ENCODE measurements at regions of chr3 and their contacts with region 1.

Region 1: DNA sequence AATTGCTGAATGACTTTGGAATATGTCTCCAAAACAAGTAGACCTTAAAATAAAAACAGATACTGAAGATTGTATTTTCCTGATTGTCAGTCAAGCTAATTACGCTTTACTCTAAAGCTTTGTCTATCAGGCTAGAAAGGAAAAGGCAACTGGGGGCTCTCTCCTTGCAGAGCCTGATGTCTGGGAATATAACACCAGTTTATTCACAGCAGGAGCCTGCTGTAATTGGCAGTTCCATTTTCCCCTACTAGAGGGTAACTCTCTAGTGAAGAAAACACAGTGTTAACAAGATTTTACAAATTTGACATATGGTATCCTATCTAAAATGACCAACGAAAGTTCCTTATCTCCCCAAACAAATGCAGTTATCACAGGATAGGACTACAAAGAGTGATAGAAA is 158.8 kb downstream of the PDZRN3 start:
- DNase-seq: no peak
- H3K4me3 ChIP-seq: no peak overlapping the region
- H3K27ac ChIP-seq: no peak overlapping the region
- H3K4me1 ChIP-seq: no peaks in the 10 kb centered on the region
- H3K27me3 ChIP-seq: no peaks in the 10 kb centered on the region
- CTCF ChIP-seq: no peak

Region 2: GRCh38 chr3:72855001-72855400 is 610.9 kb before region 1 on chr3:
- CTCF ChIA-PET with region 1: interaction called, 24 read pairs
- dilution Hi-C with region 1: no loop called
- in situ Hi-C with region 1: no loop called
- intact Hi-C with region 1: no loop called
- DNase-seq: no peak
- H3K4me3 ChIP-seq: no peak overlapping the region
- H3K27ac ChIP-seq: no peak overlapping the region
- H3K4me1 ChIP-seq: no peaks in the 10 kb centered on the region
- H3K27me3 ChIP-seq: no peaks in the 10 kb centered on the region
- CTCF ChIP-seq: no peak

Measured in mammary epithelial cell (primary cell).